ENCODE measurements at regions of chr20 and their contacts with region 1.

Region 1: DNA sequence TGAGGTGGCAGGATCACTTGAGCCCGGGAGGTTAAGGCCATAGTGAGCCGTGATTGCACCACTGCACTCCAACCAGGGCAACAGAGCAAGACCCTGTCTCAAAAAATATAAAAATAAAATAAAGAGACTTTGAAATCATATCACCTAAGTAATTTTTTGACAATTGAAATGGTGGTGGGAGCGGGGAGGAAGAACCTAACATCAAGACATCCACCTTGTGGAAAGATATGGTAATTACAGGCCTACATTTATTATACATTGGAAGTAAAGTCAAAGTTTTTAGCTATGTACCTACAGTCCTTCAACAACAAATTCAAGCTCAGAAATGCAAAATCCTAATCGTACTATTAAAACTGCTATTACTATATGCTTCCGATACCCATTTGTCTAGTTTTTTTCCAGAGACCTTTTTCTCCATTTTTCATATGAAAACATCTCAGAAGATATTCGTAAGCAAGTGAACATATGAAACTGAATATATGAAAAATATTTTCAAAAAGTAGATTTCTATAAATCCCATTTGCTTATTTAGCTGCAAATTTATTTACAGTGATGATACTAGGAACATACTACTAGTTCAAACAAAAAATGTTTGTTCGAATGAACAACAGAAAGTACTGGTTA is 83.3 kb downstream of the SYCP2 start:
- DNase-seq: peak; percentile 42
- ATAC-seq: peak; percentile 75
- H3K4me3 ChIP-seq: no peak overlapping the region
- H3K27ac ChIP-seq: no peak overlapping the region
- H3K4me1 ChIP-seq: no peaks in the 10 kb centered on the region
- H3K27me3 ChIP-seq: no peaks in the 10 kb centered on the region
- CTCF ChIP-seq: peak; percentile 52
- POLR2A ChIP-seq: no peak
- RAD21 ChIP-seq: peak; percentile 54

Region 2: DNA sequence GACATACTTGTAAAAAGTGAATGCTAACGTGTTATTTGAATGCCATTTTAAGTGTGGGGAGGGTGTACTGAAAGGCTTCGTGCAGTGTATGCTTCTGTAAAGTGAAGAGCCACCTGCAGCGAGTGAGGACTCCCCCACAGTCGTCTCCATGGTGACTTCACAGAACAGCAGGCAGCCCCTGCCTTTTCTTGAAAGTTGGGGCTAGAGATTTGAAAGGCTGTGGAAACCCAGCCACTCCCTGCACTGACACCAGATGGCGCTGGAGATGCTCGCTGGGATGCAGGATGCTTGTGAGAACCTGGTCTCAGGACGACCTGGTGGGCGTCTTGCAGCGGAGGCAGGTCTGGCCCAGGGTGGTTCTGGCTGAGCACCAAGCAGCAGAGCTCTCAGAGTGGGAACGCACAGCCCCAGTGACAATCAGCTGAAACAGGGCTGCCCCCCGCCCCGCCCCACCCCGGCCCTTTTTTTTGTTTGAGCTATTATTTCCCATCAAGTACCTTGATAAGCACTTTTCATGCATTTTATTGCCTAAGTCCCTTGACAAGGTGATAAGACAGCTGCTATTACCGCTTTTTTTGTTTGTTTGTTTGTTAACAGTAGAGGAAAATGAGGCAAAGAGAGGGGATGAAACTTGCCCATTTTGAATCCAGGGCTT is 67.0 kb before region 1 on chr20:
- CTCF ChIA-PET with region 1: interaction called, 10 read pairs
- POLR2A ChIA-PET with region 1: no interaction called
- dilution Hi-C with region 1: no loop called
- in situ Hi-C with region 1: no loop called
- intact Hi-C with region 1: loop called (anchors 2 kb)
- DNase-seq: peak; percentile 15
- ATAC-seq: peak; percentile 53; the same call in 1 of the 2 replicates
- H3K4me3 ChIP-seq: no peak overlapping the region
- H3K27ac ChIP-seq: no peak overlapping the region
- H3K4me1 ChIP-seq: no peaks in the 10 kb centered on the region
- H3K27me3 ChIP-seq: no peaks in the 10 kb centered on the region
- CTCF ChIP-seq: peak; percentile 63
- POLR2A ChIP-seq: no peak
- RAD21 ChIP-seq: peak; percentile 53

Region 3: DNA sequence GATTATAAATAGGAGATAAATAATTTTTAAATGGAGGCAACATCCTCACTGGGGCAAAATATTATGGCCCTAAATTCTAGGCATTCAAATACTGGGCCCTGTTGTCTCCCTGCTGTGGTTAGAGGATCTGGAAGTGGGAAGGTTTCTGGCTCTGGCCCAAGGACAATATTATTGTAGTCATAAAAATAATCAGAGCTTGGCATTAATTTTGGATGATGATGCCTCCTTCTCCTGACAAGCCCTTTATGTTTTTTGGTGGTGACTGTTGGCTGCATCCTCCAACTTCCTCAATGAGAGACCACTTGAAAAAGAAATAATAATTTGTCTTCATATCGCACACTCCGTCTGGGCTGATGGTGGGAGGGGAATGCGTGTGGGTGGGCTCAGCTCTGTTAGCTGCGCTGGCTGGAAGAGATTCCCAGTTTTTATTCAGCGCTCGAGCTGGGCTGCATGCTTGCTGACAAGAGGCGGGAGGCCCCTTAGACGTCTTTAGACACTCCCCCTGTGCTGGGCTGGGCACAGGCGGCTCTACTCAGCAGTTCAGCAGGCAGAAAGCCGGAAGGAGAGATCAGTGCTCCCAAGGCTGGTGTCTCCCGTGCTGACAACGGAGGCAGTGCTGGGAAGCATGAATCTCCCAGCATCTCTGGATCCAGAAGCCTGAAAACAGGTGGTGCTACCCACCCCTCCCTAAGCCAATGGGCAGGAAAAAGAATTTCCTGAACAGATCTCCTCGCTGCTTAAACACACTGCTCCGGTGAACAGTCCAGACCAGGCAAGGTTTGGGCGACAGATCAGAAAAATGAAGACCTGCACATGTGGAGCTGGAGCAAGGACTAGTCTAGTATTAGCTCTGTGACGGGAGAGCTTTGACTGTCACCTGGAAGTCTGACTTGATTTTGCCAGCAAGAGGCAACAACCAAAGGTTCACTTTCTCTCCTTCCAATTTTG is 14.4 kb before region 1 on chr20:
- CTCF ChIA-PET with region 1: interaction called, 31 read pairs
- POLR2A ChIA-PET with region 1: no interaction called
- dilution Hi-C with region 1: no loop called
- in situ Hi-C with region 1: no loop called
- intact Hi-C with region 1: no loop called
- DNase-seq: peak; percentile 5
- ATAC-seq: peak; percentile 57
- H3K4me3 ChIP-seq: no peak overlapping the region
- H3K27ac ChIP-seq: no peak overlapping the region
- H3K4me1 ChIP-seq: no peaks in the 10 kb centered on the region
- H3K27me3 ChIP-seq: no peaks in the 10 kb centered on the region; the same call in 1 of the 2 replicates
- CTCF ChIP-seq: no peak
- POLR2A ChIP-seq: no peak
- RAD21 ChIP-seq: no peak

Region 4: GRCh38 chr20:59903621-59904020 is 53.5 kb after region 1 on chr20:
- CTCF ChIA-PET with region 1: no interaction called
- POLR2A ChIA-PET with region 1: no interaction called
- dilution Hi-C with region 1: no loop called
- in situ Hi-C with region 1: no loop called
- intact Hi-C with region 1: no loop called
- DNase-seq: no peak
- ATAC-seq: no peak
- H3K4me3 ChIP-seq: no peak overlapping the region
- H3K27ac ChIP-seq: no peak overlapping the region
- H3K4me1 ChIP-seq: no peaks in the 10 kb centered on the region
- H3K27me3 ChIP-seq: no peaks in the 10 kb centered on the region
- CTCF ChIP-seq: no peak
- POLR2A ChIP-seq: no peak
- RAD21 ChIP-seq: no peak